Activated naive CD4-positive, alpha-beta T cell treated with anti-CD3 and anti-CD28 coated beads for 36 hours (primary cell): ENCODE measurements at regions of chr22 and their contacts with region 1.

Region 1: DNA sequence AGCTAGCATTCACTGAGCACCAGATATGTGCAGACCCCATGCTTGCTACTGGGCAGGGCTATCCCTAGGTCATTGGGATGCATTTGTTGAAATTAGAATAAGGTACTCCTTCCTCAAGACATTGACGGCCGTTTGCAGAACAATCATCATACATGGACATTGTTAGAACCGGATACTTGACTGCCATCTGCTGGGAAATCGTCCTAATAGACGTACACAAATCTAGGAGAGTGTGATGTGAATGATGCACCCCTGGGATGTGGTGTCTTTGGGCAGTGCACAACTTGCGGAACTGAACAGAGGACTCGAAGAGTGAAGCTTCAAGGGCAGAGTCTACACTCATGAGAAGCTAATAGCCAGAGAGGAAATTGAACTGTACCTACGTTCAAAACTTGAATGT is 35.9 kb downstream of the MYO18B start:
- DNase-seq: peak; percentile 38
- H3K4me3 Mint-ChIP-seq: no peak overlapping the region
- H3K27ac Mint-ChIP-seq: no peak overlapping the region
- H3K4me1 Mint-ChIP-seq: peaks cover 2% of the 10 kb centered on the region
- H3K27me3 Mint-ChIP-seq: peaks cover 2% of the 10 kb centered on the region

Region 2: DNA sequence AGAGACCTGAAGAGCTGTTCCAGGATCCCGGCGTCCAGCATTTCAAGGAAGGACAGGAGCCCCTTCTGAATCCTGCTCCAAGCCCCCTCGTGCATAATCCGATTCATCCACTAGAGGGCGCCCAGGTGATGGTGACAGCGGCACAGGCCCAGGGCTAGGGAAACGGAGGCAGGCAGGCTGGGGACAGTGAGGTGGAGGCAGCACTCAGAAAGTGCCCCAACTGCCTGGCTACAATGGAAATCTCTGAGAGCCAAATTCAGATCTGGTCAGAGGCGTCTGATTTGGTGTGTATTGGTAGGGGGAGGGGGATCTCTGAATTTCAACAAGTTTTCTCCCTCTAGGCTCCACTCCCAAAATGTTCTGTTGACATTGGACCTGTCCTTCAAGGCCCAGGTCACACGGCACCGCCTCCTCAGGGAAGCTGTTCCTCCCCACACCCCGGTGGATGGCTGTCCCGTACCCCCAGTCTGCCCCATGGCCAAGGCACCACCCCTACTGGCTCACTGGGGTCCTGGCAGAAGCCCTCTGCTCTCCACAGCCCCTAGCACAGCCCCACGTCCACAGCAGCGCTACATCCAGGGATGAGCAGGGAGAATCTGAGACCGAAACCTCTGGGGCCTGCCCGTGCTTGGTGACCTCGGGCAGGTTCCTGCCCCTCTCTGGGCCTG is 415.5 kb before region 1 on chr22:
- CTCF ChIA-PET with region 1: no interaction called
- intact Hi-C with region 1: loop called (anchors 5 kb)
- DNase-seq: peak; percentile 83
- H3K4me3 Mint-ChIP-seq: no peak overlapping the region
- H3K27ac Mint-ChIP-seq: no peak overlapping the region
- H3K4me1 Mint-ChIP-seq: no peaks in the 10 kb centered on the region
- H3K27me3 Mint-ChIP-seq: no peaks in the 10 kb centered on the region

Region 3: GRCh38 chr22:25465949-25466348 is 311.9 kb before region 1 on chr22:
- CTCF ChIA-PET with region 1: interaction called, 18 read pairs
- intact Hi-C with region 1: loop called (anchors 1 kb)
- DNase-seq: no peak
- H3K4me3 Mint-ChIP-seq: no peak overlapping the region
- H3K27ac Mint-ChIP-seq: no peak overlapping the region
- H3K4me1 Mint-ChIP-seq: peaks cover 2% of the 10 kb centered on the region
- H3K27me3 Mint-ChIP-seq: no peaks in the 10 kb centered on the region

Region 4: GRCh38 chr22:26330966-26331625 is 553.2 kb after region 1 on chr22:
- CTCF ChIA-PET with region 1: interaction called, 9 read pairs
- intact Hi-C with region 1: loop called (anchors 1 kb)
- DNase-seq: peak; percentile 75
- H3K4me3 Mint-ChIP-seq: no peak overlapping the region
- H3K27ac Mint-ChIP-seq: no peak overlapping the region
- H3K4me1 Mint-ChIP-seq: no peaks in the 10 kb centered on the region
- H3K27me3 Mint-ChIP-seq: peaks cover 16% of the 10 kb centered on the region